ENCODE measurements at regions of chr1 and their contacts with region 1.

Region 1: DNA sequence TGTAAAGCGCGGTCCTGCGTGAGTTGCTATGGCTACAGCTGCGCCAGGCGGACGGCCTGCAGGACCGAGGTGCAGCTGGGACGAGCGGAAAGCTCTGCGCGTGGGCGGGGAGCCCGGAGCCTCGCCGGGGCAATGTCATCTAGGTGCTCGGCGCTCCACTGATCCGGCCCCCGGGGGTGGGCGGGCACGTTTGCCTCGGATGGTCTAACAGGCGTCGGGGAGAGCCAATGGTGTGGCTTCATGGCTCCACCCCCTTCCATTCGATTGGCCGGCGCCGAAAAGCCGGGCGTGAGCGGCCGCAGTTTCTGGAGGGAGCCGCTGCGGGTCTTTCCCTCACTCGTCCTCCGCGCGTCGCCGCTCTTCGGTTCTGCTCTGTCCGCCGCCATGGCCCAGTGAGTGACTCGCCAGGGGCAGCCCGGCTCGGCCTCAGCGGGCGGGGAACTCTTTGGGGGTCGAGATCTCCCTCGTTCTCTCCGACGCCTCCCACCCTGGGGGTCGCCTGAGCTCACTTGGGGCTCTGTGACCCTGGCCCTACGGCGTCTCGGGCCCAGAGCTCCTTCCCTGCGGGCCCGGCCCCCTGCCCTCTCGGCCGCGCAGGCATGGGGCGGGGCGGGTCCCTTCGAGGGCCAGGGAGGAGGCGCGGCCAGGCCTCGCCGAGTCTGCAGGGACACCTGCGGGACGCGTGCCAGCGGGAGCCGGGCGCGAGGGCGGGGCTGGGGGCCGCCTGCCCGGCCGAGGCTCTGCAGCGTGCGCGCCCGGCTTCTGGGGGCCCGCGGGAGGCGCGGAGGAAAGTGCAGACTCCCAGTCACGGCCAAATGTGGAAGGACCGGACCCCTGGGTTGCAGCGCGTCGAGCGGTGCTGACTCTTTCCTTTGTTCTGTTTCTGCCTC is at the start of gene PGD:
- DNase-seq: peak; percentile 99
- ATAC-seq: peak; percentile 94
- H3K4me3 Mint-ChIP-seq: peak within 1 kb of the TSS; percentile 96
- H3K27ac Mint-ChIP-seq: peak within 1 kb of the TSS; percentile 95
- H3K4me1 Mint-ChIP-seq: peaks cover 12% of the 10 kb centered on the region
- H3K27me3 Mint-ChIP-seq: no peaks in the 10 kb centered on the region; the same call in 1 of the 2 replicates
- CTCF ChIP-seq: no peak
- total RNA-seq, gene PGD: 270 to 278 TPM (median 272 TPM) in 3 replicates

Region 2: GRCh38 chr1:10378081-10378841 is 20.7 kb before region 1 on chr1:
- CTCF ChIA-PET with region 1: interaction called, 11 read pairs
- POLR2A ChIA-PET with region 1: no interaction called
- DNase-seq: no peak
- ATAC-seq: no peak
- H3K4me3 Mint-ChIP-seq: no peak overlapping the region
- H3K27ac Mint-ChIP-seq: no peak overlapping the region
- H3K4me1 Mint-ChIP-seq: no peaks in the 10 kb centered on the region
- H3K27me3 Mint-ChIP-seq: no peaks in the 10 kb centered on the region
- CTCF ChIP-seq: no peak